H1 (cell line): ENCODE measurements at regions of chr22 and their contacts with region 1.

Region 1: DNA sequence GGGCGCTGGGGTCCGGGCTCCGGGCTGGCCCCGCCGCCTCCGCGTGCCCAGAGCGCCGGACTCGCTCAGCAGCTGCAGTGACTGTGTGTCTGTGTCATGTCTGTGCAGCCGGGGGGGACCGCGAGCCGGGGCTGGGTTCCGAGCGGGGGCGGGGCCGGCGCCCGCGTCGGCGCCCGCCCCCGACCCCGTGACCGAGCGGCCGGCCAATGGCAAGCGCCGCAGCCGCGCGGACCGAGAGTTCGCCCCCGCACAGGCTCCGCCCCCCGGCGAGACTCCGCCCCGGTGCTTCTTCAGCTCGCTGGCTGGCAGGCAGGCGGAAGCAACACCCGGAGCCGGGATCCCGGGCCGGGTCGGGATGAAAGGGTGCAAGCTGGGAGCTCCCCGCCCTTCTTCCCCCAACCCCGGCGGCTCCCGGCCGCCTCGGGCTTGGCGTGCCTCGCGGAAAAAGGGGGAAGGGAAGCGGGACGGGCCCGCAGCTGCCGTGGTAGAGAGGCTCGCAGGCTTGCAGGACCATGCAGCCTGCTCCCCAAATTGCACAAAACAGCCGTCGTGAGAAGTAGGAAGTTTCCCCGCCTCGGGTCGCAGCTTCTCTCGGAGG is 750 bp upstream of the LARGE1 start:
- DNase-seq: peak; percentile 88 to 100
- H3K4me3 ChIP-seq: peak overlapping the region; percentile 55 to 95 (median 77)
- H3K27ac ChIP-seq: no peak overlapping the region
- H3K4me1 ChIP-seq: peaks cover 7 to 18% (median 13%) of the 10 kb centered on the region in 4 experiments; a peak in 6 of 7 replicates
- H3K27me3 ChIP-seq: no peaks in the 10 kb centered on the region; a peak in 1 of 7 replicates
- CTCF ChIP-seq: no peak
- EP300 ChIP-seq: no peak; a peak in 1 of 3 replicates
- POLR2A ChIP-seq: 0 out of 3 replicates have a peak, but pooled peaks of 1 of the 2 experiments have one; percentile 26
- RAD21 ChIP-seq: no peak

Region 2: DNA sequence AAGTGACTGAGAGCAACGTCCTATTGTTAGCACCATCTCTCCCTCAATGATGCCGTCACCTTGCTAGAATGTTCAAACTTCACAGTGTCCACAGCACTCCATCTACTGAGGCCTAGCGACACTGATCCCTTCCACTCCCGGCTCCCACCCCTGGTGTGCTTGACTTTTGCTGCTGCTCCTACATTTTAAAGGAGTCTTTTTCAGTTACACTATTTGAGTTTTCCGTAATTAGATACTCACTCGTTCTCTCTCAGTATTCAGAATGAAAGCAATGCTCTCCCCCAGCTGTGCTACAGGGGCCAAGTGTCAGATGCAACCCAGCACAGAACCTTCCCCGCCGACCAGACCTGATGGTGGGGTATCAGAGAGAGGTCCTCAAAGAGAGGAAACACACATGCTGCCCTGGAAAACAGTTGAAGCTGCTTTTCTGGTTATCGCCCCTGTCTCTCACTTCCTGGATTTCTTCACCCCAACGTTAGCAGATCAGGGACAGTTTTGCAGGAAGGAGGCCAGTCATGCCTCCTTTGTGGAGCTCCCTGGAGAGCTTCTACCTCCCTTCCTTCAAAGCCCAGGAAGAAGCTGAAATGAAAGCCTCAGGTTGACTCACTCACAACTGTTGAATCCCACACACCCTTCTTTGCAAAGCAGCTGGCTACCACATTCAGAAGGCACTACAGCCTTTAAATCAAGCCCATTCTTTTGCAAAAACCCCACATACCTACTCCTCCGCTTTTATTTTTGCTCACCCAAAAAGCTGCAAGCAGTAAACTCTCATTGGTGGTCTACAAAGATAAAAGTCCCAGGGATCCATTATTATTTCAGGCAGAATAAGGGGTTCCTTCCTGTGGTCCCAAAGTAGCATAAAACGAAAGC is 24.2 kb before region 1 on chr22:
- CTCF ChIA-PET with region 1: interaction called, 10 read pairs
- POLR2A ChIA-PET with region 1: interaction called, 9 read pairs
- DNase-seq: peak in 1 of 2 experiments; percentile 56
- H3K4me3 ChIP-seq: peak overlapping the region in 3 of 4 experiments; percentile 16 to 40 (median 32); a peak in 6 of 8 replicates
- H3K27ac ChIP-seq: peak overlapping the region; percentile 79
- H3K4me1 ChIP-seq: peaks cover 39 to 85% (median 51%) of the 10 kb centered on the region in 4 experiments
- H3K27me3 ChIP-seq: no peaks in the 10 kb centered on the region
- CTCF ChIP-seq: no peak
- EP300 ChIP-seq: peak in 1 of 2 experiments; percentile 42; a peak in 1 of 3 replicates
- POLR2A ChIP-seq: peak in 1 of 2 experiments; percentile 45; a peak in 2 of 3 replicates
- RAD21 ChIP-seq: no peak; a peak in 2 of 4 replicates

Region 3: DNA sequence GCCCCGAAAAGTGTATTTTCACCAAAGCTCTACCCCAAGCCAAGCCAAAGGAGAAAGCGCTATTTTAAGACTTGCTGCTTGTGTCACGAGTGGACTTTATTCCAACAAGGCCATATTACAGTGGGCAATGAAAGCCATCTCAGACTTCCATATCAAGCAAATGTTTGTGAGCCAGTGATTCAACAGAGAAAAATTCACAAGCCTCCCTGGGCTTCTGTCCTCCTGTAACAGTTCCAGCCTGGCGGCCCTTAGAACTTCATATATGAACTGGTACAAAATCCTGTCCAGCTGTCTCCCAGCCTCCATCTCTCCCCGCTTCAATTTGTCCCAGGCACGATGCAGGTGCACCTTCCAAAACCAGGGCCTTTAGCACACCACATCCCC is 12.0 kb before region 1 on chr22:
- CTCF ChIA-PET with region 1: interaction called, 5 read pairs
- POLR2A ChIA-PET with region 1: interaction called, 10 read pairs
- DNase-seq: no peak
- H3K4me3 ChIP-seq: no peak overlapping the region
- H3K27ac ChIP-seq: no peak overlapping the region
- H3K4me1 ChIP-seq: peaks cover 1 to 14% (median 10%) of the 10 kb centered on the region in 4 experiments
- H3K27me3 ChIP-seq: no peaks in the 10 kb centered on the region
- CTCF ChIP-seq: no peak
- EP300 ChIP-seq: no peak
- POLR2A ChIP-seq: no peak
- RAD21 ChIP-seq: no peak

Region 4: GRCh38 chr22:33932997-33933396 is 12.0 kb after region 1 on chr22:
- CTCF ChIA-PET with region 1: interaction called, 17 read pairs
- POLR2A ChIA-PET with region 1: interaction called, 5 read pairs
- DNase-seq: no peak
- H3K4me3 ChIP-seq: no peak overlapping the region
- H3K27ac ChIP-seq: no peak overlapping the region
- H3K4me1 ChIP-seq: no peaks in the 10 kb centered on the region
- H3K27me3 ChIP-seq: no peaks in the 10 kb centered on the region
- CTCF ChIP-seq: no peak
- EP300 ChIP-seq: no peak
- POLR2A ChIP-seq: no peak
- RAD21 ChIP-seq: no peak

Region 5: GRCh38 chr22:33940741-33941140 is 19.7 kb after region 1 on chr22:
- CTCF ChIA-PET with region 1: interaction called, 17 read pairs
- POLR2A ChIA-PET with region 1: interaction called, 5 read pairs
- DNase-seq: no peak
- H3K4me3 ChIP-seq: no peak overlapping the region
- H3K27ac ChIP-seq: no peak overlapping the region
- H3K4me1 ChIP-seq: no peaks in the 10 kb centered on the region
- H3K27me3 ChIP-seq: no peaks in the 10 kb centered on the region; a peak in 1 of 7 replicates
- CTCF ChIP-seq: no peak
- EP300 ChIP-seq: no peak
- POLR2A ChIP-seq: no peak
- RAD21 ChIP-seq: no peak

Region 6: DNA sequence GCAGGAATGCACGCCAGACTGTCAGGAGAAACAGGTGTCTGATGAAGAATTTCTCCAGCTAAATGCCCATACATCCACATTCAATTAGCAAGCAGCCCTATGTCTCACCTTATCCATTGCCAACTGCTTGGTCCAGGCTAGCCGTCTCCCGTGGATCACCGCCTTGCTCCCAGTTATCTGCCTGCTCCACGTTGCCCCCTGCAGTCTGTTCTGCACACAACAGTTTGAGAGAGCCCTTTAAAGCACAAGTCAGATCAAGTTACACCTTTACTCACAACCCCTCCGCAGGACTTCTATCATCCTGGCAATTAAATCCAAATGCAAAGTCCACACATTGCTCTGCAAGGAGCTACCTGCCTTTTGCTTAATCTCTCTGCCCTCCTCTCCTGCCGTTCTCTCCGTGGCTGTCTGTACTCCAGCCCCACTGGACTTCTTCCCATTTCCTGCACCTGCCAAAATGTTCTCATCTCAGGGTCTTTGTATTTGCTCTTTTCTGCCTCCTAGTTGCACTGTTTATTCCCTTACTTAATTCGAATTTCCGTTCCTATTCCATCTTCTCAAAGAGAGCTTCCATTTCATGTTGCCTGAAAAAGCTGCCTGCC is 184.5 kb after region 1 on chr22:
- CTCF ChIA-PET with region 1: interaction called, 22 read pairs
- POLR2A ChIA-PET with region 1: interaction called, 3 read pairs
- DNase-seq: peak; percentile 51 to 91
- H3K4me3 ChIP-seq: peak overlapping the region in 2 of 4 experiments; percentile 11 to 41; a peak in 1 of 8 replicates
- H3K27ac ChIP-seq: no peak overlapping the region
- H3K4me1 ChIP-seq: no peaks in the 10 kb centered on the region; a peak in 1 of 7 replicates
- H3K27me3 ChIP-seq: no peaks in the 10 kb centered on the region
- CTCF ChIP-seq: peak; percentile 78 to 92 (median 83)
- EP300 ChIP-seq: no peak
- POLR2A ChIP-seq: no peak
- RAD21 ChIP-seq: peak; percentile 63 to 77

Region 7: DNA sequence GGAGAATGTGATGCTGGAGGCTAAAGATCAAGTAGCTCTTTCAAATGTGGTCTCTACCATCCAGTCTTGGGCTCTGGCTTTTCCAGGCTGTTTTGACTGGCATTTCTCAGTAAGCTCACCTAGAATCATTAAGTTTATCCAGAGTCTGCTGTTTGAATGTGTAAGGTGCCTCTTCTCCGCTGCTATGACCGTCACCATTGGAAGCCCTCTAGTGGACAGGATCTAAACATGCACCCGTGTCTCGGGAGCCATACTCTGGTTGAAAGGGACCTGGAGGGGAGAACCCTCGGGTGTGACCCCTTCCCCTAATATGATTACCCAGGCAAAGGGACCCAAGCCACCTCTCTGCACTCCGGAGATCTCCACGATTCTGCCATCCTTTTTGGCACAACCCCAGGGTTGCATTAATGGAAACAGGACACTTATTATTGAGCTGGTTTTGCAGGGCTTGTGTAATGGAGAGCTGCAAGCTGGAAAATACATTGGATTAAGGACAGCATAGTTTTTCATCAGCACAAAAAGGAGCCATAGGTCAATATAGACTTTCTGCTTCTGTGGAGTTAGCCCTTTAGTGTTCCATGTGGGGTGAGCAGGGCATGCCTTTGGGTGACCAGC is 190.3 kb after region 1 on chr22:
- CTCF ChIA-PET with region 1: interaction called, 22 read pairs
- POLR2A ChIA-PET with region 1: interaction called, 3 read pairs
- DNase-seq: peak in 1 of 2 experiments; percentile 59
- H3K4me3 ChIP-seq: no peak overlapping the region
- H3K27ac ChIP-seq: no peak overlapping the region
- H3K4me1 ChIP-seq: no peaks in the 10 kb centered on the region
- H3K27me3 ChIP-seq: no peaks in the 10 kb centered on the region
- CTCF ChIP-seq: peak; percentile 67 to 84 (median 69)
- EP300 ChIP-seq: no peak
- POLR2A ChIP-seq: no peak
- RAD21 ChIP-seq: peak; percentile 67 to 69